ENCODE measurements at regions of chrX and their contacts with region 1.

Region 1: GRCh38 chrX:147958291-147958690 is 22.8 kb upstream of the FMR1NB start:
- DNase-seq: no peak

Region 2: DNA sequence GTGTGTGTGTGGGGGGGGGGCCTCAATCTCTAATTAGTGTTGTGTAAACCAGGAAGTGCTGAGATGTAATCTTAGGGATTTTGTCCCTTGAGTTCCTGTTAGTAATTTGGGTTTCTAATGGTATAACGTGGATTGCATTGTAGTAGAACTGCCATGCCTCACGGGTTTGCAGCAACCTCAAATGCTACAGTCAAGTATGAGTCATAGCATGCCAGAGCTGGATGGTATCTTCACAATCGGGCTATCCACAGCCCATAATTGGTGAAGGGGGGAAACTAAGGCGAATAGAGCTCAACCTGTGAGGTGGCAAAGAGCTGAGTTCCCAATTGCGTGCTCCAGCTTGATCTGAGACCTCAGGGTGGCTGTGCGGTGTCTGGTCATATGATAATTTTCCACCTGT is 20.6 kb after region 1 on chrX:
- intact Hi-C with region 1: loop called in 1 of 2 experiments (anchors 1 kb)
- DNase-seq: no peak

Measured in posterior vena cava (tissue), 2 donors.